Activated CD4-positive, alpha-beta T cell treated with anti-CD3 and anti-CD28 coated beads, Interleukin-2, amount 10 ng/mL, durations not matched to agents 24 days and 14 days (primary cell): ENCODE measurements at regions of chr7 and their contacts with region 1.

Region 1: GRCh38 chr7:47991741-47992311 is 12.4 kb upstream of the HUS1 start:
- DNase-seq: peak; percentile 95
- H3K4me3 Mint-ChIP-seq: peak overlapping the region; percentile 88
- H3K27ac Mint-ChIP-seq: peak overlapping the region; percentile 86
- H3K4me1 Mint-ChIP-seq: peaks cover 18% of the 10 kb centered on the region
- H3K27me3 Mint-ChIP-seq: no peaks in the 10 kb centered on the region

Region 2: GRCh38 chr7:47568547-47568946 is 423.3 kb before region 1 on chr7:
- intact Hi-C with region 1: no loop called
- DNase-seq: no peak
- H3K4me3 Mint-ChIP-seq: no peak overlapping the region
- H3K27ac Mint-ChIP-seq: no peak overlapping the region
- H3K4me1 Mint-ChIP-seq: no peaks in the 10 kb centered on the region
- H3K27me3 Mint-ChIP-seq: peaks cover 4% of the 10 kb centered on the region

Region 3: GRCh38 chr7:47979145-47979831 is 12.5 kb before region 1 on chr7 and contains the start of gene HUS1:
- intact Hi-C with region 1: loop called (anchors 1 kb)
- DNase-seq: peak; percentile 98
- H3K4me3 Mint-ChIP-seq: peak within 1 kb of the TSS; percentile 94
- H3K27ac Mint-ChIP-seq: peak within 1 kb of the TSS; percentile 97
- H3K4me1 Mint-ChIP-seq: peaks cover 16% of the 10 kb centered on the region
- H3K27me3 Mint-ChIP-seq: peaks cover 5% of the 10 kb centered on the region
- total RNA-seq, gene HUS1: 32.3 and 35.9 TPM in 2 replicates

Region 4: DNA sequence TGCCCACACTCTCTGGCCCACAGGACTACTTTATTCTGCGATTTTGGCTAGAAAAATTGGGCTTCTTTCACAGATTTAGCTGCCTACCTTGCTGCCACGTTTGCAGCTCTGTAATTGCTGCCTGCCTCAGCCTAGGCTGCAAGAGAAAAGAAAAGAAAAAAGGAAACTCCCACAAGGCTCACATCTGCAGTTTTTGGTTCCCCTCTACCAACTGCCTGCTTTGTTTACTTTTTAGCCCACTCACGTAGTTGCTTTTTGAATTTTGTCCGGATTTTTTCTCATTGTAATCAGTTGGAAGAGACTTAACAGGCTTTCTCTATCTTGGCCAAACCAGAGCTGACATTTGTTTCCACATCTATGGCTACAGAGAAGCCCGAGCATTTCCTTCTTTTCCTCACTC is 12.8 kb after region 1 on chr7:
- intact Hi-C with region 1: no loop called
- DNase-seq: no peak
- H3K4me3 Mint-ChIP-seq: no peak overlapping the region
- H3K27ac Mint-ChIP-seq: no peak overlapping the region
- H3K4me1 Mint-ChIP-seq: no peaks in the 10 kb centered on the region
- H3K27me3 Mint-ChIP-seq: peaks cover 27% of the 10 kb centered on the region

Region 5: DNA sequence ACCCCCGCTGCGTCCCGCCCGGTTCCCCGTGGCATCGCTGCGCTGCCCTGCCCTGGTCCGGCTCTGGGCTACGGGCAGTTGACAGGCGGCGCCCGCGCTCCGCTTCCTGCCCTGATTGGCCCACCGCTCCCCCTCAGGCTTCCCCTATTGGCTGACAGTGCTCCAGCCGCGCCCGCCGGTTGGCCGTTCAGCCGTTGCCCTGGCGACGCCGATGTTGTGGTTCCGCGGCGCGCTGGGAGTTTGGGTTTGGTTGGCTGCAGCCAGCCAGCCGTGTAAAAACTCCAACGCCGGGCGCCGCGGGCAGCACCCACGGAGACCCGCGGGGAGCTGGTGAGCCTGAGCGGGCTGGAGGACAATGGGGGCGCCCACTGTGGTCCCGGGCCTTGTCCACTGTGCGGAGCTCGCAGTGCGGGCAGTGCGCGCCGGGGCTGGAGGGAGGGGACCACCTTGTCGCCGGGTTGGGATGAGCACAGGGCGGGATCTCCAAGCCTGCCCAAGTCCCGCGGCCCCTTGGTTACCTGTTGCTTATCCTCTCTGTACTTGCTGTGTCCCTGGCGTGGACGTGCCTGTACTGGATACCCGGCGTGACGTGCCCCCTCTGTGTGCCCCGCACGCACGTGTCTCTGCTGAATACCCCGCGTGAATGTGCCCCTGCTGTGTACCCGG is 43.6 kb after region 1 on chr7 and contains the start of gene C7orf57:
- intact Hi-C with region 1: loop called (anchors 1 kb)
- DNase-seq: peak; percentile 97
- H3K4me3 Mint-ChIP-seq: peak within 1 kb of the TSS; percentile 84
- H3K27ac Mint-ChIP-seq: peak within 1 kb of the TSS; percentile 74
- H3K4me1 Mint-ChIP-seq: peaks cover 11% of the 10 kb centered on the region
- H3K27me3 Mint-ChIP-seq: peaks cover 64% of the 10 kb centered on the region
- total RNA-seq, gene C7orf57: 0.14 TPM in 2 replicates